ENCODE measurements at regions of chr14 and their contacts with region 1.

Region 1: GRCh38 chr14:75132382-75133086 is 5.7 kb upstream of the NEK9 start:
- DNase-seq: peak in 4 of 5 donors; percentile 42 to 69 (median 66)
- H3K4me3 ChIP-seq: no peak overlapping the region
- H3K4me3 Mint-ChIP-seq: no peak overlapping the region
- H3K27ac ChIP-seq: no peak overlapping the region
- H3K27ac Mint-ChIP-seq: peak overlapping the region in 7 of 8 donors; percentile 8 to 82 (median 19)
- H3K4me1 ChIP-seq: peaks cover 6% of the 10 kb centered on the region
- H3K4me1 Mint-ChIP-seq: peaks cover 9 to 32% (median 23%) of the 10 kb centered on the region in 3 donors
- H3K27me3 ChIP-seq: no peaks in the 10 kb centered on the region
- H3K27me3 Mint-ChIP-seq: no peaks in the 10 kb centered on the region

Region 2: GRCh38 chr14:74711651-74712050 is 420.9 kb before region 1 on chr14:
- CTCF ChIA-PET with region 1: no interaction called
- POLR2A ChIA-PET with region 1: interaction called, 10 read pairs
- DNase-seq: no peak
- H3K4me3 ChIP-seq: no peak overlapping the region
- H3K4me3 Mint-ChIP-seq: peak overlapping the region in 6 of 7 donors; percentile 42 to 100 (median 92)
- H3K27ac ChIP-seq: no peak overlapping the region
- H3K27ac Mint-ChIP-seq: peak overlapping the region in 2 of 8 donors; percentile 10 to 84
- H3K4me1 ChIP-seq: peaks cover 24% of the 10 kb centered on the region
- H3K4me1 Mint-ChIP-seq: peaks cover 52 to 82% (median 78%) of the 10 kb centered on the region in 3 donors
- H3K27me3 ChIP-seq: no peaks in the 10 kb centered on the region
- H3K27me3 Mint-ChIP-seq: peaks cover 0 to 2% of the 10 kb centered on the region in 2 donors